MCF 10A (cell line): ENCODE measurements at regions of chr12 and their contacts with region 1.

Region 1: DNA sequence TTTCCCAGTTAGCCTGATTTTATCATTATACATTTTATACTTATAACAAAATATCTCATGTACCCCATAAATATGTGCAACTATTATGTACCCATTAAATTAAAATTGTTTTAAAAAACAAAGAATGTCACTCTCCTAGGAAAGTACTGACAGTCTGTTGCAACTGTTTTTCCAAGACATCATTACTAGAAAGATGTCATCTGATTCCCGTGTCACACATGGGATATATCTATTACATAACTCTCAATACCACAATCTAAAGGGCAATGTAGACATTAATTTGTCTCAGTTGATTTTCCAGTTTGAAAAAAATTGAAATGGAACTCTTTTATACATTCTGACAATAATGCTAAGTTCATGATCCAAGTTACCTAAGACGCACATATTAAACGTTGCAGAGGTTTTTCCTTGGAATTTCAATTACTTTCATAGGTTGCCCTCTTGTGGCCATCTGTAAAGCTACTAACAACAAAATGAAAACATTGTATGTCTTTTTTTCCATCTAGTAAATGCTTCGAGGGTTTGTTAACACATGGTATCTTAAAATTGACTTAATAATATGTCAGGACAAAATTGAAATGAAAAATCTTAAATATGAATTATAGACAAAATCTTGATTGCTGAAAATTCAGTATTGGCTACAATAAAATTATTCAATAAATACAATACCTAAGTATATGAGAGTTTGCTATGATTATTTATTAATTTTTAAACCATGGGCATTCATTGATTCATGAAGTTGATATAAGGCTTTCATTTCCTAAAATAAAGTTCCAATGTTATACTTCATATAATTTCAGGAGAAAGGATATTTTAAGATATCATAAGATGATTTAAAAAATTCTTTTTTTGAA is 131.6 kb downstream of the PPFIA2 start:
- DNase-seq: peak; percentile 61
- H3K4me3 Mint-ChIP-seq: no peak overlapping the region
- H3K27ac Mint-ChIP-seq: no peak overlapping the region
- H3K4me1 Mint-ChIP-seq: no peaks in the 10 kb centered on the region
- H3K27me3 Mint-ChIP-seq: no peaks in the 10 kb centered on the region
- CTCF ChIP-seq: peak; percentile 51

Region 2: GRCh38 chr12:80412369-80412953 is 1215.1 kb before region 1 on chr12:
- CTCF ChIA-PET with region 1: no interaction called
- POLR2A ChIA-PET with region 1: no interaction called
- intact Hi-C with region 1: loop called (anchors 10 kb)
- DNase-seq: peak; percentile 66
- H3K4me3 Mint-ChIP-seq: no peak overlapping the region
- H3K27ac Mint-ChIP-seq: no peak overlapping the region
- H3K4me1 Mint-ChIP-seq: no peaks in the 10 kb centered on the region
- H3K27me3 Mint-ChIP-seq: peaks cover 67% of the 10 kb centered on the region
- CTCF ChIP-seq: peak; percentile 66

Region 3: DNA sequence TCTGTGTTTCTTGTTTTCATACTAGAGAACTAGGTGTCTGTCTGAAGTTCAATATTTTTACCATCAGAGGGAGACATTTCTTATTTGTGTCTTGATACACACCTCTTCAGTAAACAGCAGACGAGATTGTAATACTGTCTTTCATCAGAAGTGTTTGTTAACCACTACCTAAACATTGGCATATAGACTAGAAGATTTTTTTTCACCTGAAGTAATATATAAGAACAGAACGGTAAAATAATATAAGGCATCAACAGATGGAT is 359.0 kb before region 1 on chr12:
- CTCF ChIA-PET with region 1: interaction called, 3 read pairs
- POLR2A ChIA-PET with region 1: no interaction called
- intact Hi-C with region 1: loop called (anchors 1 kb)
- DNase-seq: peak; percentile 41
- H3K4me3 Mint-ChIP-seq: no peak overlapping the region
- H3K27ac Mint-ChIP-seq: no peak overlapping the region
- H3K4me1 Mint-ChIP-seq: no peaks in the 10 kb centered on the region
- H3K27me3 Mint-ChIP-seq: peaks cover 55% of the 10 kb centered on the region
- CTCF ChIP-seq: peak; percentile 25

Region 4: DNA sequence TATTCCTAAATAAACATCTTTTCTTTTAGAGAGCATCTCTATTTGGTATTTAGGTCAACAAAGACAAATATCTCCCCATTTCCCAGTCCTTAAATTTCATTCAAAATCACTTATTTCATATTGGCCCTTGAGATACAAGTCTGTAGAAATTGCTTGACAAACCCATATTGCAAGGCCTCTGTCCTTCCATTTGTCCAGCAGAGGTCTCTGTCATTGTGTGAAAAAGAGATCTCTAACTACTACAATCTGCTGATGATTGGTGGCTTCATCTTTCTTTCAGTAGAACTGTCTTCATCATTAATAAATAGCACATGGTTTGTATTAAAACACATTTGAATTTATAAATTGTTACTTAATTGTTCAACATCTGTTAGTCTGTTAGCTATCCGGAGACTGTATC is 297.1 kb before region 1 on chr12:
- CTCF ChIA-PET with region 1: no interaction called
- POLR2A ChIA-PET with region 1: no interaction called
- intact Hi-C with region 1: loop called (anchors 1 kb)
- DNase-seq: peak; percentile 11
- H3K4me3 Mint-ChIP-seq: no peak overlapping the region
- H3K27ac Mint-ChIP-seq: no peak overlapping the region
- H3K4me1 Mint-ChIP-seq: no peaks in the 10 kb centered on the region
- H3K27me3 Mint-ChIP-seq: peaks cover 17% of the 10 kb centered on the region
- CTCF ChIP-seq: no peak

Region 5: DNA sequence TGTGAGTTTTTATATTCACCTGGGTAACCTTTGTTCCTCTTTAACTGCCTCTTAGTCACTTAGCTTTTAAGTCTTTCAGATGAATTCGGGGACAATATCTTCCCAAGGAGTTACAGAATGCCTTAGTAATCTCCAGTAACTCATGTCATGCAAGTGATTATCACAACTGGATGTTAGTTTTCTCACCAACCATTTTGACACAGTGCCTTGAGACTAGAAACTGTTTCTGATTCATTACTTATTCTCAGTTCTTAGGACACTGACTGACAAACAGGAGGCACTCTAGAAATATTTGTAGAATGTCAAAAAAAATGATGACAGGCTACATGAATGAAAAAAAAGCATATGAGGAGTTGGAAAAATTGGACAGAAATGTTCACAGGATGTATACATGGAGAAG is 214.6 kb before region 1 on chr12:
- CTCF ChIA-PET with region 1: no interaction called
- POLR2A ChIA-PET with region 1: no interaction called
- intact Hi-C with region 1: no loop called
- DNase-seq: no peak
- H3K4me3 Mint-ChIP-seq: no peak overlapping the region
- H3K27ac Mint-ChIP-seq: no peak overlapping the region
- H3K4me1 Mint-ChIP-seq: no peaks in the 10 kb centered on the region
- H3K27me3 Mint-ChIP-seq: peaks cover 32% of the 10 kb centered on the region
- CTCF ChIP-seq: no peak

Region 6: DNA sequence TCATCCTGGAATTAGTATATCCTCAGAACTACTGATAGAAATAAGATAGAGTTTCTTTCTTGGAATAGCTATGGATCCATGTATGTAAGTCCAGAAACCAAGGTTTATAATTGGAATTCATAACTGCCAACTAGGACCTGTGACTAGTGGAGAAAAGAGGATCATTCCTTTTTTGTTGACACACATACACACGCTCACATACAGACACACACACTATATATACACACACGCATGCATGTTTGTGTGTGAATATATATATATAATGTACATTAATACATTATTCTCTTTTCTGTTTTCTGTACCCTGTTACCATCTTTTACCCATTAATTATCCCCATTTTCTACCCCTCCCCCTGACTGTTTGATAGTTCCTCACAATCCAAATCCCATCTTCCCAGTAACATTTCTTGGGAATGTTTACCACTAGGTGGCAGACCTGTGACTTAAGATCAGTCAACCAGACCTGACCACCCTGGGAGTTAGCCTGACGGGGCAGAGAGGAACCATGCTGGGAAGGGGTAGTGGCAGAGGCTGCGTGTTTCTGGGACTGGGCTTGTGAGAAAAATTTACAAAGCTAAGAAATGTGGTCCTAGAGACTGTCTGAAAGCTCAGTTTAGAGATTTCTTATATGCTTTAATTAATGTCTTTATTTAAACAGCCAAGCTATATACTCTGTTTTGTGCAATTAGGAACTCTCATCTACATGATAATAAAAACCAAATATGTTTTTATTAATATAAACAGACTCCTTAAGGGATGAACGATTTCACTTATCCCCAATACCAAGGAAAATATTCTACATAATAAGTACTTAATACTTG is 176.4 kb before region 1 on chr12:
- CTCF ChIA-PET with region 1: interaction called, 21 read pairs
- POLR2A ChIA-PET with region 1: no interaction called
- intact Hi-C with region 1: loop called (anchors 1 kb)
- DNase-seq: peak; percentile 76
- H3K4me3 Mint-ChIP-seq: no peak overlapping the region
- H3K27ac Mint-ChIP-seq: no peak overlapping the region
- H3K4me1 Mint-ChIP-seq: no peaks in the 10 kb centered on the region
- H3K27me3 Mint-ChIP-seq: peaks cover 30% of the 10 kb centered on the region
- CTCF ChIP-seq: peak; percentile 41

Region 7: GRCh38 chr12:81610955-81611889 is 16.3 kb before region 1 on chr12:
- CTCF ChIA-PET with region 1: interaction called, 27 read pairs
- POLR2A ChIA-PET with region 1: no interaction called
- intact Hi-C with region 1: no loop called
- DNase-seq: peak; percentile 30
- H3K4me3 Mint-ChIP-seq: no peak overlapping the region
- H3K27ac Mint-ChIP-seq: no peak overlapping the region
- H3K4me1 Mint-ChIP-seq: no peaks in the 10 kb centered on the region
- H3K27me3 Mint-ChIP-seq: peaks cover 43% of the 10 kb centered on the region
- CTCF ChIP-seq: peak; percentile 27

Region 8: DNA sequence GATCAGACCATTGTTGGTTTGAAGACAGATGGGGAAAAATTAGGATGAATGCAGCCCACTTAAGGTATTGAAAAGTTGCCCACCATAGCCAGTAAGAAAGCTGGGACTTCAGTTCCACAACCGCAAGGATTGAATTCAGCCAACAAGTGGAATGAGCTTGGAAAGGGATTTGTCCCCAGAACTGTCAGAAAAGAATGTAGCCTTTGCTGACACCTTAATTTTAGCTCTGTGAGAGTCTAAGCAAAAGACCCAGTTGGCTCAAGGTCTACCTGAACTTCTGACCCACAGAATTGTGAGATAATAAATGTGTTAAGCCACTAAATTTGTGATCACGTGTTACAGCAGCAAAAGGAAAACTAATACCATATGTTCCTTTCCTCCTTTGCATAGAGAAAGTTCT is 102.2 kb after region 1 on chr12:
- CTCF ChIA-PET with region 1: no interaction called
- POLR2A ChIA-PET with region 1: no interaction called
- intact Hi-C with region 1: no loop called
- DNase-seq: no peak
- H3K4me3 Mint-ChIP-seq: no peak overlapping the region
- H3K27ac Mint-ChIP-seq: no peak overlapping the region
- H3K4me1 Mint-ChIP-seq: no peaks in the 10 kb centered on the region
- H3K27me3 Mint-ChIP-seq: peaks cover 66% of the 10 kb centered on the region
- CTCF ChIP-seq: no peak